ENCODE measurements at regions of chr6 and their contacts with region 1.

Region 1: GRCh38 chr6:44265007-44265721 is at the start of gene NFKBIE:
- DNase-seq: peak; percentile 97
- ATAC-seq: peak; percentile 96
- total RNA-seq, gene NFKBIE: 2.4 TPM

Region 2: GRCh38 chr6:44338228-44339122 is 73.3 kb after region 1 on chr6:
- intact Hi-C with region 1: loop called (anchors 1 kb)
- DNase-seq: peak; percentile 74
- ATAC-seq: peak; percentile 83

Region 3: GRCh38 chr6:44456070-44456965 is 191.2 kb after region 1 on chr6:
- intact Hi-C with region 1: loop called (anchors 10 kb)
- DNase-seq: peak; percentile 83
- ATAC-seq: peak; percentile 68